Activated CD4-positive, alpha-beta T cell treated with anti-CD3 and anti-CD28 coated beads, Interleukin-2, amount 10 ng/mL, durations not matched to agents 24 days and 14 days (primary cell): ENCODE measurements at regions of chr13 and their contacts with region 1.

Region 1: DNA sequence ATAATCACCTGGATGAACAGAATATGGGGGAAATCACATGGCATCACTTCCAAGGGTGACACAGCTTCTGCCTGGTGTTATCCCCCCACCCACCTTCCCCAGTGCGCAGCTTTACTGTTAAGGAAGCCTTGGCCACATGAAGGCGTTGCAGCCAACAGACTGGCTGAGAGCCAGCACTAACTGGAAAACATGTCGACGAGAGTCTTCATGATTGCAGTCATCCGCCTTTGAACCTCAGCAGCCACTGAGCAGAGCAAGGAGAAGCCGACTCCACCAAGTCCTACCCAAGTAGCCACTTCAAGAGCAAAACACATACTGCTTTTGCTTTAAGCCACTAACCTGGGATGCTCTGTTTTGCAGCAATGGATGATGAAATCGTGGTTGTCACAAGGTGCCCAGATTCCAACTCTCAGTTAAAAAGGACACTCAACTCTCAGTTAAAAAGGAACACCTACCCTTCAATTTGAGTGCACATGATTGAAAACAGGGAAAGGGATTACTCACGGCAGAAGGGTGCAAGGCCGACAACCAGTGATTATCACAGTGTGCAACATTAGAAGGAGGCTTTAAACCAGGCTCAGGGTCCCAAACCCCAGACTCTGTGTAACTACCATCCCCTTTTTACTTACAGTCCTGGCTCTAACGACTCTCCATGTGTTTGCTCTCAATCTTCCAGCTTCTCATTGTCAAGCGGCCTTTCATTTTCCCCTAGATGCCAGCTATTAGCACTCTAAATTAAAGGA is 149.1 kb downstream of the KLF12 start:
- DNase-seq: peak; percentile 88
- H3K4me3 Mint-ChIP-seq: peak overlapping the region; percentile 75
- H3K27ac Mint-ChIP-seq: peak overlapping the region; percentile 87
- H3K4me1 Mint-ChIP-seq: peaks cover 34% of the 10 kb centered on the region
- H3K27me3 Mint-ChIP-seq: no peaks in the 10 kb centered on the region

Region 2: DNA sequence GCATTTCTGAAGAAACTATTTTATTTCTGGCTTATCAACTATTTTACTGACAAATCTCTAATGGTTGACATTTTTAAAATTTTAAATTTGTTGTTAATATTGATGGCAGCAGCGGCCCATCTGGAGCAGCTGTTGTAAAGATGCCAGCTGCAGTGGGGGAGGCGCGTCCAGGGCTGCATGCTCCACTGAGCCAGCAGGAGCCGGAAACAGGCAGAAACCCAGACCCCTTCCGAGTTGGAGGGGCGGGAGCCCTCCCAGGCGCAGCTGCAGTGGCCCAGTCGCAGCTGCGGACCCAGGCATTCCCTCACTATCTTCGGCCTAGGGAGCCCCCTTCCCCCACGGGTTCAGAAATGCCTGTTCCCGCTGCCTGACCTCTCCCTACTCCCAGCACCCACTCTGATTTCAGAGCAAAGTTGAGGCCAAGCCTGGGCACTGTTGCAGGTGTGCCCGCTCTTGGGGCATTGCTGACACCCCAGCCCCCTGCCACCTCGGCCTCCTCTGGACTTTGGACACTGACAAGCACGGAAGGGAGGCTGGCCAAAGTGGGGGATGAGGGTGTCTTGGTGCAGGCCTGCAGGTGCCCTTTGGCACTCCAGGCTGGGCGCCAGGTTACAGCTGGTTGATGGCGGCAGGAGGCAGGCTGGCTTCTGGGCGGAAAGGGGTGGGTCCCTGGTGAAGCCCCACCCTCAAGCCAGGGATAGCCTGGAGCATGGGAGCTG is 1134.0 kb before region 1 on chr13:
- intact Hi-C with region 1: no loop called
- DNase-seq: no peak
- H3K4me3 Mint-ChIP-seq: no peak overlapping the region
- H3K27ac Mint-ChIP-seq: no peak overlapping the region
- H3K4me1 Mint-ChIP-seq: no peaks in the 10 kb centered on the region
- H3K27me3 Mint-ChIP-seq: no peaks in the 10 kb centered on the region

Region 3: DNA sequence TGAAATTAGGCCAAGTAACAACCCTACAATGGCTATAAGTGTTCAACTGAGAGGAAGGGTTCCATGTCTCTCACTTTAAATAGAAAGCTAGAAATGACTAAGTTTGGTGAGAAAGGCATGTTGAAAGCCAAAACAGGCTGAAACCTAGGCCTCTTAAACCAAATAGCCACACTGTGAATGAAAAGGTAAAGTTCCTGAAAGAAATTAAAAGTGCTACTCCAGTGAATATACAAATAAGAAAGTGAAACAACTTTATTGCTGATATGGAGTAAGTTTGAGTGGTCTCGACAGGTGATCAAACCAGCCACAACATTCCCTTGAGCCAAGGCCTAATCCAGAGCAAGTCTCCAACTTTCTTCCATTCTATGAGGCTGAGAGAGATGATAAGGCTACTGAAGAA is 60.5 kb before region 1 on chr13:
- intact Hi-C with region 1: loop called (anchors 2 kb)
- DNase-seq: no peak
- H3K4me3 Mint-ChIP-seq: no peak overlapping the region
- H3K27ac Mint-ChIP-seq: peak overlapping the region; percentile 77
- H3K4me1 Mint-ChIP-seq: peaks cover 23% of the 10 kb centered on the region
- H3K27me3 Mint-ChIP-seq: no peaks in the 10 kb centered on the region

Region 4: GRCh38 chr13:73943137-73943964 is 41.8 kb before region 1 on chr13:
- intact Hi-C with region 1: loop called (anchors 5 kb)
- DNase-seq: no peak
- H3K4me3 Mint-ChIP-seq: peak overlapping the region; percentile 24
- H3K27ac Mint-ChIP-seq: peak overlapping the region; percentile 69
- H3K4me1 Mint-ChIP-seq: peaks cover 25% of the 10 kb centered on the region
- H3K27me3 Mint-ChIP-seq: no peaks in the 10 kb centered on the region

Region 5: GRCh38 chr13:74026753-74027152 is 41.6 kb after region 1 on chr13:
- intact Hi-C with region 1: loop called (anchors 2 kb)
- DNase-seq: peak; percentile 86
- H3K4me3 Mint-ChIP-seq: peak overlapping the region; percentile 76
- H3K27ac Mint-ChIP-seq: peak overlapping the region; percentile 86
- H3K4me1 Mint-ChIP-seq: peaks cover 27% of the 10 kb centered on the region
- H3K27me3 Mint-ChIP-seq: no peaks in the 10 kb centered on the region

Region 6: GRCh38 chr13:74246487-74246886 is 261.4 kb after region 1 on chr13:
- intact Hi-C with region 1: loop called (anchors 5 kb)
- DNase-seq: no peak
- H3K4me3 Mint-ChIP-seq: no peak overlapping the region
- H3K27ac Mint-ChIP-seq: no peak overlapping the region
- H3K4me1 Mint-ChIP-seq: peaks cover 54% of the 10 kb centered on the region
- H3K27me3 Mint-ChIP-seq: peaks cover 1% of the 10 kb centered on the region

Region 7: GRCh38 chr13:74987124-74987690 is 1002.1 kb after region 1 on chr13:
- intact Hi-C with region 1: no loop called
- DNase-seq: no peak
- H3K4me3 Mint-ChIP-seq: no peak overlapping the region
- H3K27ac Mint-ChIP-seq: no peak overlapping the region
- H3K4me1 Mint-ChIP-seq: no peaks in the 10 kb centered on the region
- H3K27me3 Mint-ChIP-seq: no peaks in the 10 kb centered on the region